Activated T-helper 1 cell treated with anti-CD3 and anti-CD28 coated beads, Interleukin-12 subunit alpha, Interleukin-12 subunit beta, Interleukin-2, Interleukin-4 antibody, amounts not matched to agents 30 ng/mL and 10 ng/mL and 1 ng/mL, durations not matched to agents 14 hours and 24 hours and 36 hours (primary cell): ENCODE measurements at regions of chr10 and their contacts with region 1.

Region 1: DNA sequence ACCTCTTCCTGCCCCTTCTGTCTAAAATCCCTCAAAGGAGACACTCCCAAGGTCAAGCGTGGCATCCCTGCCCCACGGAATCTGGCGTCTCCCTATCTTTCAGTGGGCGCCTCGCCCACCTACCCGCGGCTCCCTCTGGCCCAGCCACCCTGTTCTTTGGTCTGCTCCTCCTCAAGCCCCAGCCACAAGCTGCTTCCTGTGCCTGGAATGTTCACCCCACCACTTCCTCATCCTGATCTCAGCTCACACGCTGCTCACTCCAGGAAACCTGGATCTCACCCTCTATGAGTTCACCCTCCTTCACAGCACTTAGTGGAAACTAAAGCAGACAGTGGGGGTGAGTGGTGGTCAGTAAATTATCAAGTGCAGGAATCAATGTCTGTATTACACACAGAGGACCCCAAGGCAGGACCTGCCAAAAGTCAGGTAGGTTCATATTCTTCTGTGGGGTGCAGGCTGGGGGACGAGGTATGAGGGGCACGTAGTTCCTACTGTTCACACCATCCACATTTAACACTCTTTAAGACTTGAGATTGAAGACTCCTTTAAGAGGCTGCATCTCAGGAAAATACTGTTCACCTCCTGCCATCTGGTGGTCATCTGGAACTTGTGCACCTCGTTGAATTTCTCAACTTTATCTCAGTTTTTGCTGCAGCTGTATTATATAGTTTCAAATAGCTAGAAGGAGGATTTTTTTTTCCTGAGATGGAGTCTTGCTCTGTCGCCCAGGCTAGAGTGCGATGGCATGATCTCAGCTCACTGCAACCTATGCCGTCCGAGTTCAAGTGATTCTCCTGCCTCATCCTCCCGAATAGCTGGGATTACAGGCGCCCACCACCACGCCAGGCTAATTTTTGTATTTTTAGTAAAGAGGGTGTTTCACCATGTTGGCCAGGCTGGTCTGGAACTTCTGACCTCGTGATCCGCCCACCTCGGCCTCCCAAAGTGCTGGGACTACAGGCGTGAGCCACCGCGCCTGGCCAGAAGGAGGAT is 166.6 kb downstream of the ARHGAP21 start:
- DNase-seq: no peak
- H3K4me3 Mint-ChIP-seq: no peak overlapping the region
- H3K27ac Mint-ChIP-seq: no peak overlapping the region
- H3K4me1 Mint-ChIP-seq: peaks cover 6% of the 10 kb centered on the region
- H3K27me3 Mint-ChIP-seq: peaks cover 2% of the 10 kb centered on the region

Region 2: DNA sequence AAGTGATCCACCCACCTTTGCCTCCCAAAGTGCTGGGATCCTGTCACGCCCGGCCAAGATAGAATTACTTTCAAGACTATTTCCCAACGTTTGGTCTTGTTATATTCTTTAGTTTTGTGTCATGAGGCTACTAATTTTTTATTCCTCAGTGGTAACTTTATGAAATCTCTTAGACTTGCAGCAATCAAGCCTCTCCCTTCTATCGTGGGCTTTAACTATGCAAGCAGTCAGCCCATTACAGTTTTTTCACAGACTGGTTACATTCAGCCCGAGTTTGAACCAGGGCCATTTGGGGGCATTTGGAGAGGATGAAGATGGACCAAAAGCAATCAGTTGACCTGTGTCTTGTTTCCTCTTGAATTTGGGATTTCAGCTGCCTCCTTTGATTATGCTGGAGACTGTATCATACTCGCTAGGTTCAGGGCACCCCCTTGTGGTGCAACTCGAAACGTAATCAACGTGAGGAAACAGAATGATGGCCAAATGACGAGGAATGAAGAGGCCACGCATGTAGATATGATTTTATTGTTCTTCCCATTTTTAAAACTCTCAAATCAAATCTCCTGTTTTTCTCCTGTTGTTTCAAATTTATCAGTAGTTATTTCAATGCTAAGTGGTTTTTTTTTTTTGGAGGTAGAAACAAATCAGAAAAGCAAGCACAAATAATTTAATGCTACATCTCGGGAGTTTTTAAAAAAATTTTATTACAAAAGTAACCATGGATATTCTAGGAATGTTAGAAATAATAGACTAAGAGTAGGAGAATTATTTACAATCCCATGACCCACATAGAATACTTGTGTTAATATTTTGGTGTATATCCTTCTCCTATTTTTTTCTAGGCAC is 196.5 kb before region 1 on chr10:
- intact Hi-C with region 1: loop called (anchors 1 kb)
- DNase-seq: peak; percentile 5
- H3K4me3 Mint-ChIP-seq: no peak overlapping the region
- H3K27ac Mint-ChIP-seq: no peak overlapping the region
- H3K4me1 Mint-ChIP-seq: peaks cover 6% of the 10 kb centered on the region
- H3K27me3 Mint-ChIP-seq: peaks cover 7% of the 10 kb centered on the region